Endothelial cell of umbilical vein (primary cell): ENCODE measurements at regions of chr10 and their contacts with region 1.

Region 1: DNA sequence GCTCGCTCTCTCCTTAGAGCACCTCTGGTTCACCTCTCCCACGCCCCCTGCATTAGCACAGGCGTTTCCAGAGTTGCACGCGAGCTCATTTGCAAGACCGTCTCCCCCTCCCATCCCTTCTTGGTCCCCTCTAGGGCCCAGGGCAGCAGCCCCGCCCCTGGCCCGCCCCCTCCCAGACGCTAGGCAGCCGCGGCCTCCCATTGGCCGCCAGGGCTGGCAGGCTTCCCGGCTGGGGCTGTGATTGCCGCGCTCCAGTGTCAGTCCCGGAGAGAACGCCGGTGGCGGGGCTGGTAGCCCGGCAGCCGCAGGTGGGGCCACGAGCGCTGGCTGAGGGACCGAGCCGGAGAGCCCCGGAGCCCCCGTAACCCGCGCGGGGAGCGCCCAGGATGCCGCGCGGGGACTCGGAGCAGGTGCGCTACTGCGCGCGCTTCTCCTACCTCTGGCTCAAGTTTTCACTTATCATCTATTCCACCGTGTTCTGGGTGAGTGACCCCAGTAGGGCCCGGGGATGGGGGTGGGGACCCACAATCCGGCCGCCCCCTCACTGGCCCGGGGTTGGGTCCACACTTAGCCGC is at the start of gene TSPAN15:
- DNase-seq: peak; percentile 87
- H3K4me3 ChIP-seq: peak within 1 kb of the TSS; percentile 61 to 92 (median 81)
- H3K27ac ChIP-seq: peak within 1 kb of the TSS; percentile 5
- H3K4me1 ChIP-seq: peaks cover 67% of the 10 kb centered on the region
- H3K27me3 ChIP-seq: no peaks in the 10 kb centered on the region
- CTCF ChIP-seq: no peak
- POLR2A ChIP-seq: no peak
- total RNA-seq, gene TSPAN15: 78.4 and 100 TPM in 2 replicates

Region 2: DNA sequence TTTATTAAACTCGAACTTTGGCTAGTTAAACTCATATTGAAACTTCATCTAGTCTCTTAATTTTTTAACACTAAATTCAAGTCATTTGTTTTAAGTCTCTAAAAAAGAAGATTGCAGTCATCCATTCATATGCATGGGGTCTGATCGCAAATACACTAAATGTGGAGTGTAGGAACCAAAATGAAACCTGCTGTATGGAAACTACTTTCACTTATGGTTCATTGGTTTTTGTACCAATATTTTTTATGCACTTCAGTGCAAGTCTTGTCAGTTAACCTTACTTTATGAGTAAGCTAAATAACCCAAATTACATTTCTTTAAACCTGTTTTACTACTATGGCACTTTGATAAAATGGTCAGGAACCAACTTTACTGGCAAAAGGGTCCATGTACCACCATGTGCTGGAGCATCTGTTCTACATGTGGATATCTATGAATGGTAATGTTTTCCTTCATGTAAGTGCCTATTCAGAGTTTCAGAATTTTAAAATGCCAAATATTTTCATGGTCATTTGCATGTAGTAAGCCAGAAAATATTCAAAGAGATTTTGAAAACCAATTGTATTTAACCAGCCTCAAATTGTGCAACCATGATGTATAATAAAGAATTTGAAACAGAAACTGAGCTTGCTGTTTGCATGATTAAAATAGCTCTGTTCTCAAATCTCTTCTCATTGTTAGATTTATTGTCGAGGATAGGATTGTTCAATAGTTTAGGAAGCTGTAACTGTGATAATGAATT is 278.9 kb before region 1 on chr10:
- CTCF ChIA-PET with region 1: no interaction called
- POLR2A ChIA-PET with region 1: no interaction called
- dilution Hi-C with region 1: no loop called
- intact Hi-C with region 1: no loop called
- DNase-seq: no peak
- H3K4me3 ChIP-seq: no peak overlapping the region
- H3K27ac ChIP-seq: no peak overlapping the region
- H3K4me1 ChIP-seq: no peaks in the 10 kb centered on the region
- H3K27me3 ChIP-seq: no peaks in the 10 kb centered on the region
- CTCF ChIP-seq: no peak
- POLR2A ChIP-seq: no peak

Region 3: GRCh38 chr10:69434169-69434568 is 17.1 kb before region 1 on chr10:
- CTCF ChIA-PET with region 1: interaction called, 16 read pairs
- POLR2A ChIA-PET with region 1: interaction called, 3 read pairs
- dilution Hi-C with region 1: no loop called
- intact Hi-C with region 1: no loop called
- DNase-seq: peak; percentile 48
- H3K4me3 ChIP-seq: no peak overlapping the region
- H3K27ac ChIP-seq: no peak overlapping the region
- H3K4me1 ChIP-seq: peaks cover 8% of the 10 kb centered on the region
- H3K27me3 ChIP-seq: no peaks in the 10 kb centered on the region
- CTCF ChIP-seq: no peak
- POLR2A ChIP-seq: no peak

Region 4: GRCh38 chr10:69472544-69472943 is 21.2 kb after region 1 on chr10:
- CTCF ChIA-PET with region 1: interaction called, 60 read pairs
- POLR2A ChIA-PET with region 1: interaction called, 9 read pairs
- dilution Hi-C with region 1: no loop called
- intact Hi-C with region 1: no loop called
- DNase-seq: no peak
- H3K4me3 ChIP-seq: no peak overlapping the region
- H3K27ac ChIP-seq: no peak overlapping the region
- H3K4me1 ChIP-seq: peaks cover 37% of the 10 kb centered on the region
- H3K27me3 ChIP-seq: no peaks in the 10 kb centered on the region
- CTCF ChIP-seq: no peak
- POLR2A ChIP-seq: no peak

Region 5: GRCh38 chr10:69486922-69487666 is 35.8 kb after region 1 on chr10:
- CTCF ChIA-PET with region 1: interaction called, 11 read pairs
- POLR2A ChIA-PET with region 1: no interaction called
- dilution Hi-C with region 1: no loop called
- intact Hi-C with region 1: no loop called
- DNase-seq: no peak
- H3K4me3 ChIP-seq: no peak overlapping the region
- H3K27ac ChIP-seq: no peak overlapping the region
- H3K4me1 ChIP-seq: peaks cover 8% of the 10 kb centered on the region
- H3K27me3 ChIP-seq: no peaks in the 10 kb centered on the region
- CTCF ChIP-seq: no peak
- POLR2A ChIP-seq: no peak

Region 6: DNA sequence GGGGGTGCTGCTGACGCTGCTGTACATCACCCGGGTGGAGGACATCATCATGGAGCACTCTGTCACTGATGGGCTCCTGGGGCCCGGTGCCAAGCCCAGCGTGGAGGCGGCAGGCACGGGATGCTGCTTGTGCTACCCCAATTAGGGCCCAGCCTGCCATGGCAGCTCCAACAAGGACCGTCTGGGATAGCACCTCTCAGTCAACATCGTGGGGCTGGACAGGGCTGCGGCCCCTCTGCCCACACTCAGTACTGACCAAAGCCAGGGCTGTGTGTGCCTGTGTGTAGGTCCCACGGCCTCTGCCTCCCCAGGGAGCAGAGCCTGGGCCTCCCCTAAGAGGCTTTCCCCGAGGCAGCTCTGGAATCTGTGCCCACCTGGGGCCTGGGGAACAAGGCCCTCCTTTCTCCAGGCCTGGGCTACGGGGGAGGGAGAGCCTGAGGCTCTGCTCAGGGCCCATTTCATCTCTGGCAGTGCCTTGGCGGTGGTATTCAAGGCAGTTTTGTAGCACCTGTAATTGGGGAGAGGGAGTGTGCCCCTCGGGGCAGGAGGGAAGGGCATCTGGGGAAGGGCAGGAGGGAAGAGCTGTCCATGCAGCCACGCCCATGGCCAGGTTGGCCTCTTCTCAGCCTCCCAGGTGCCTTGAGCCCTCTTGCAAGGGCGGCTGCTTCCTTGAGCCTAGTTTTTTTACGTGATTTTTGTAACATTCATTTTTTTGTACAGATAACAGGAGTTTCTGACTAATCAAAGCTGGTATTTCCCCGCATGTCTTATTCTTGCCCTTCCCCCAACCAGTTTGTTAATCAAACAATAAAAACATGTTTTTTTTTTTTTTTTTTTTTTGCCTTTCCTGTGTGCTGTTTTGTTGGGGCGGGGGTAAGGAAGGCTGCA is 55.8 kb after region 1 on chr10:
- CTCF ChIA-PET with region 1: interaction called, 56 read pairs
- POLR2A ChIA-PET with region 1: interaction called, 5 read pairs
- dilution Hi-C with region 1: no loop called
- intact Hi-C with region 1: loop called (anchors 1 kb)
- DNase-seq: peak; percentile 11
- H3K4me3 ChIP-seq: no peak overlapping the region
- H3K27ac ChIP-seq: no peak overlapping the region
- H3K4me1 ChIP-seq: peaks cover 7% of the 10 kb centered on the region
- H3K27me3 ChIP-seq: no peaks in the 10 kb centered on the region
- CTCF ChIP-seq: no peak
- POLR2A ChIP-seq: no peak